ENCODE measurements at regions of chr5 and their contacts with region 1.

Region 1: DNA sequence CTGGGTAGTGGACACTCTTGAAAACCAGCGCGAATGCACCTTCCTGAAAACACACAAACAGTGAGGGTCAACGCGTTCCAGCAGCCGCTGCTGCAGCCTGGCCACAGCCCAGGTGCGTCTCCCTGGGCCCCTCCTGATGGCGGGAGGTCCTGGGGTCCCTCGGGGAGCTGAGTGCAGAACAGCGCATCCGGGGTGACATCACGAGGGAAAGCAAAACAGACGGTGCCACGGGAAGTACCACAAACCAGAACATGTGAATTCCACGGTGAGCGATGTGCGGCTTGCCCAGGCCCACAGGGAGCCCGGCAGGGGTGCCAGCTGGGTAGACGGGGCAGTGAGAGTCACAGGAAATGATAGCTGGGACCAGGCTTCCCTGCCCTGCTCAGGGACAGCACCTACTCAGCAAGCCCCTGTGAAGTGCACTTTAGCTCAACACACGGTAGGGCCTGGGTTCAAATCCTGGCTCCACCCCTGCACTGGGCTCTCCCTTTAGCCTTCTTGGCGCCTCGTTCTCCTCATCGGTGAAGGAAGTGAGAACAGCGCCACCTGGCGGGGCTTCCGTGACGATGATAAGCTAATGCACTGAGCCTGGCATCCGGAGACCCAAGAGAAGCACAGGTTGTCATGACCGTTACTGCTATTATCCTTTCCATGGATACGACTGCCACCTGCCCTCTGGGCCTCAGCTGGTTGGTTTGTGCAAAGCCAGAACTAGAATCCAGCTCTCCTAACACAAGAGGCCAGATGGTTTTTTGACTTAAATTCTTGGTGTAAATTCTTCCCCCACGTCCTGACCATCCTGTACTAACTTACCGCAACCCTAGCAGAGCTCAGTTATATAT is 24.6 kb downstream of the GFPT2 start:
- DNase-seq: peak; percentile 83 to 89 (median 88)
- ATAC-seq: peak in 1 of 2 donors; percentile 39
- H3K4me3 ChIP-seq: no peak overlapping the region
- H3K27ac ChIP-seq: no peak overlapping the region
- H3K4me1 ChIP-seq: no peaks in the 10 kb centered on the region
- H3K27me3 ChIP-seq: no peaks in the 10 kb centered on the region

Region 2: DNA sequence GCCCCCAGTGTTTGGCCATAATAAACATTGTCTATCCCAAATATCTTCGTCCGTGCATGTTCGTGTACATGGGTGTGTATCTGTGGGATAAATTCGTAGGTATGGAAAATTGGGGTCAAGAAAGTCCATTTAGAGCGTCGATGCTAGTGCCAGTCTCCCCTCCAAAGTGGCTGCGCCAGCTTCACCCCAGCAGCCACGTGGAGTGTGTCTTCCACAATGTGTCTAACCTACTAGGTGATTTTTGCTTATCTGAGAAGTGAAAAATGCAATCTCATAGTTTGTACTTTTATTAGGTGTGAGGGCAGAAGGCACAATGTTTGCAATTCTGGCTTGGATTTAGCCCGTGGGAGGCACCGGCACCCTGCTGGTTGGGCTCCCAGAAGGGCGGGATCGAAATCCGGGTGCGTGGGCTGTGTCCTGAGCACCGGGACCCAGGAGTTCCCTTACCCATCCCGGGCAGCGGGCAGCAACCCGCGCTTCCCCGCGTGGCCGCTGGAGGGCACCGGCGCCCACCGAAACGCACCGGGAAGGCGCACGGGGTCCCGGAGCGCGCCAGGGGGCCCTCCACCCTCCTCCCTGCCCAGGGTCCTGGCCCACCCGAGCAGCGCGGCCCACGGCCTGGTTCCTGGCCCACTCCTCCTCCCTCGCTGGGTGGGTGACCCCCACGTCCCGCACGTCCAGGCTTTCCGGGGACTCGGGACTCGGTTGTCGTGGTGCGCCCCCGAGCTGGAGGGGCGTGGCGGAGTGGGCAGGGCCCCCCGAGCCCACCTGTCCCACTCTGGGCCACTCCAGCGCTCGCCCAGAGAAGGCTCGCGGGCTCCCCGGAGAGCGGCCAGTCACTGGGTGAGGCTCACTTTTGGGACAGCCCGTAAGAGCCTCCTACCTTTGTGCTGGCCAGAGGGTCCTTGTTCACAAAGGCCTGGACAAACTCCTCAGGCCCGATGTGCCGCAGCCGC is 201.5 kb before region 1 on chr5:
- intact Hi-C with region 1: loop called in 1 of 4 experiments (anchors 10 kb)
- DNase-seq: peak in 2 of 3 donors; percentile 69
- ATAC-seq: peak; percentile 63 to 64
- H3K4me3 ChIP-seq: no peak overlapping the region
- H3K27ac ChIP-seq: no peak overlapping the region
- H3K4me1 ChIP-seq: no peaks in the 10 kb centered on the region
- H3K27me3 ChIP-seq: no peaks in the 10 kb centered on the region

Region 3: DNA sequence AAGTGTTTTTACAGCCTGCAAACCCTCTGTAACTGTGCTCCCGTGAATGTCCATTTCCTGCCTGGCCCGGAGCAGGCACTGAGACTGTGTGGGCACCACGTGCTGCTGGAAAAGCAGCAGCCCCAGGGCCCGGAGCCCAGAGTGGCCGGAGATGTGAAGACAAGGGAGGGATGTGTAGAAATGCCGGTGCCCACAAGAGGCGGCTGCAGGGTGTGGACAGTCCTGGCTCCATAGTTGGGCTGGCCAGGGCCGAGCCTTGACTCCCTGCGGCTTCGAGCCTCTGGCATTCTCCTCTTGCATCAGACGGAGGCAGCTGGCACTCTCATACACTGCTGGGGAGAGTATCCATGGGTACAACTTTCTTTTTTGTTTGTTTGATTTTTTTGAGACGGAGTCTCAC is 37.8 kb after region 1 on chr5:
- intact Hi-C with region 1: no loop called
- DNase-seq: peak in 1 of 3 donors; percentile 68
- ATAC-seq: peak; percentile 67 to 78
- H3K4me3 ChIP-seq: no peak overlapping the region
- H3K27ac ChIP-seq: no peak overlapping the region
- H3K4me1 ChIP-seq: no peaks in the 10 kb centered on the region
- H3K27me3 ChIP-seq: no peaks in the 10 kb centered on the region